Transverse colon (tissue), 4 donors: ENCODE measurements at regions of chr14 and their contacts with region 1.

Region 1: GRCh38 chr14:32076278-32077080 is 625 bp upstream of the ARHGAP5 start:
- DNase-seq: peak; percentile 97
- H3K4me3 ChIP-seq: peak overlapping the region; percentile 91 to 96 (median 95)
- H3K27ac ChIP-seq: peak overlapping the region; percentile 99 to 100 (median 99)
- H3K4me1 ChIP-seq: peaks cover 0 to 52% (median 25%) of the 10 kb centered on the region in 4 donors
- H3K27me3 ChIP-seq: no peaks in the 10 kb centered on the region
- CTCF ChIP-seq: no peak
- EP300 ChIP-seq: peak; percentile 21
- POLR2A ChIP-seq: peak; percentile 95

Region 2: GRCh38 chr14:32202998-32203882 is 126.8 kb after region 1 on chr14 and contains the start of gene RNU6-8:
- in situ Hi-C with region 1: loop called in 2 of 4 experiments (anchors 25 kb)
- intact Hi-C with region 1: loop called (anchors 5 kb)
- DNase-seq: peak; percentile 92
- H3K4me3 ChIP-seq: peak within 1 kb of the TSS; percentile 52 to 75 (median 62)
- H3K27ac ChIP-seq: peak within 1 kb of the TSS; percentile 80 to 89 (median 85)
- H3K4me1 ChIP-seq: peaks cover 0 to 23% (median 16%) of the 10 kb centered on the region in 4 donors
- H3K27me3 ChIP-seq: no peaks in the 10 kb centered on the region
- CTCF ChIP-seq: peak in 1 of 5 experiments; percentile 17
- EP300 ChIP-seq: no peak
- POLR2A ChIP-seq: peak; percentile 55
- total RNA-seq, gene RNU6-8: not detected

Region 3: DNA sequence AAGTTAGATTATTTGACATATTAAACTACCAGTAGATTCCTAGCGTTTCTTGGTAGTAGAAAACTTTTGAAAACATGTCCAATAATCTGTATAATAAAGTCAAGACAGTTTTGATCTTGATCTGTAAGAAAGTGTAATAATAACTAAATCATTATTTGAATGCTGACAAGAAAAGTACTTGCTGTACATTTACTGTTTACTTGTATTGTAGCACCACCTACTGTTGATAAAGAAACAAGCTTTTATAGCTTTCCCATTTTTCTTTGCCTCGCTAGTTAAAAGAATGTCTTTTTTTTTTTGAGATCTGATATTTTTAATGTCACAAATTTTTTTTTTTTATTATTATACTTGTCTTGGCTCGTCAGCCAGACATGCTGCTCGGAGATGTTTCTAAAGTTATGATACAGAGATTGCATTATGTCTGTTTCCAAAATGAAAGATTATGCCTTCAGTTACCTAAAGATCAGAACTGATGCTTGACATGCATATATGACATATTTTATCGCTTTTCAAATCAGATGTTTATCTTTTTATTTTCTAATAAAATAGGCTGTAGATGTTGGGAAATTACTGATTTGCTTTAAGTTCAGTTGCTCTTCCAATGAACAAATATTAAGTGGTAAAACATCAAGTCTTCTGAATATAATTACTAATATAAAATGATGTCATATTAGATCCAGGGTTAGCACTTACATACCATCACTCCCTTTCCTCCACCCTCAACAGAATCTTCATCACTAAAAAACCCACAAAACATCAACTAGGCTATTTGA is 393.1 kb after region 1 on chr14:
- in situ Hi-C with region 1: no loop called
- intact Hi-C with region 1: loop called (anchors 5 kb)
- DNase-seq: no peak
- H3K4me3 ChIP-seq: no peak overlapping the region
- H3K27ac ChIP-seq: peak overlapping the region; percentile 48 to 61 (median 52)
- H3K4me1 ChIP-seq: peaks cover 0 to 15% (median 6%) of the 10 kb centered on the region in 4 donors
- H3K27me3 ChIP-seq: no peaks in the 10 kb centered on the region
- CTCF ChIP-seq: peak; percentile 48 to 70 (median 56)
- EP300 ChIP-seq: no peak
- POLR2A ChIP-seq: no peak